Naive thymus-derived CD4-positive, alpha-beta T cell (primary cell): ENCODE measurements at regions of chr1 and their contacts with region 1.

Region 1: GRCh38 chr1:94061513-94062443 is 59.2 kb downstream of the ABCA4 start:
- DNase-seq: peak in 5 of 9 donors; percentile 11 to 31 (median 17)
- ATAC-seq: peak; percentile 78
- H3K4me3 ChIP-seq: no peak overlapping the region
- H3K4me3 Mint-ChIP-seq: no peak overlapping the region
- H3K27ac ChIP-seq: no peak overlapping the region
- H3K27ac Mint-ChIP-seq: no peak overlapping the region
- H3K4me1 ChIP-seq: no peaks in the 10 kb centered on the region
- H3K4me1 Mint-ChIP-seq: peaks cover 0 to 2% (median 0%) of the 10 kb centered on the region in 7 donors
- H3K27me3 ChIP-seq: no peaks in the 10 kb centered on the region
- H3K27me3 Mint-ChIP-seq: peaks cover 7 to 25% (median 14%) of the 10 kb centered on the region in 5 donors

Region 2: DNA sequence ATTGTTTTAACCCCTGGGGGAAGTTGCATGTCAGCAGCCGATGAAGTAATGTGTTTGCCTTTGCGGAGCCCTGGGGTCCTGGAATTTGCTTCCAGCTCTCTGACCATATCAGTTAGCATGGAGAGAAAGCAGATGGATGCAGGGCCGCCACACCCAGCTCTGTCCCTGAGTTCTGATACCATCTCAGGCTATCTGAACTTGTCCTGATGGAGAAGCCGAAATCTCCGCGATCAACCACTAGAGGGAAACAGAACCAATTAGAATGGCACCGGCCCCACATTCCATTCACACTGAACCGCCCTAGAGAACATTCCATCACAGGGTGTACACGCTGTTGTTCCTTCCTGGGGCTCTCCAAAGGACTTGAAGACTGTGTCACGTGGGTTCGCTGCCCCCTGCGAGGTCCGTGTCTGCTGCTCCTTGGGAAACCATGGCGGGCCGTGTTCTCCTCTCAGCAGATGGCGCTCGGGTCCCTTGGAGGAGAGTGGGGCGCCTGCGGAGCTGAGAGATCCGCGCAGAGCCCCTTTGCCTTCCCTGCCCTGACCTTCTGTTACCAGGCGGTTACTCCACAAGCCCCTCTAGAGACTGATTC is 16.2 kb before region 1 on chr1:
- CTCF ChIA-PET with region 1: no interaction called
- POLR2A ChIA-PET with region 1: no interaction called
- intact Hi-C with region 1: no loop called
- DNase-seq: peak in 6 of 9 donors; percentile 14 to 39 (median 20)
- ATAC-seq: peak; percentile 56
- H3K4me3 ChIP-seq: no peak overlapping the region
- H3K4me3 Mint-ChIP-seq: peak overlapping the region in 9 of 10 donors; percentile 25 to 77 (median 68)
- H3K27ac ChIP-seq: no peak overlapping the region
- H3K27ac Mint-ChIP-seq: no peak overlapping the region
- H3K4me1 ChIP-seq: no peaks in the 10 kb centered on the region
- H3K4me1 Mint-ChIP-seq: peaks cover 0 to 10% (median 5%) of the 10 kb centered on the region in 7 donors
- H3K27me3 ChIP-seq: no peaks in the 10 kb centered on the region
- H3K27me3 Mint-ChIP-seq: peaks cover 0 to 28% (median 24%) of the 10 kb centered on the region in 5 donors

Region 3: GRCh38 chr1:94105957-94106529 is 44.3 kb after region 1 on chr1:
- CTCF ChIA-PET with region 1: no interaction called
- POLR2A ChIA-PET with region 1: no interaction called
- intact Hi-C with region 1: no loop called
- DNase-seq: no peak
- ATAC-seq: no peak
- H3K4me3 ChIP-seq: no peak overlapping the region
- H3K4me3 Mint-ChIP-seq: no peak overlapping the region
- H3K27ac ChIP-seq: no peak overlapping the region
- H3K27ac Mint-ChIP-seq: no peak overlapping the region
- H3K4me1 ChIP-seq: no peaks in the 10 kb centered on the region
- H3K4me1 Mint-ChIP-seq: peaks cover 0 to 7% (median 0%) of the 10 kb centered on the region in 7 donors
- H3K27me3 ChIP-seq: no peaks in the 10 kb centered on the region
- H3K27me3 Mint-ChIP-seq: peaks cover 27 to 53% (median 43%) of the 10 kb centered on the region in 5 donors

Region 4: DNA sequence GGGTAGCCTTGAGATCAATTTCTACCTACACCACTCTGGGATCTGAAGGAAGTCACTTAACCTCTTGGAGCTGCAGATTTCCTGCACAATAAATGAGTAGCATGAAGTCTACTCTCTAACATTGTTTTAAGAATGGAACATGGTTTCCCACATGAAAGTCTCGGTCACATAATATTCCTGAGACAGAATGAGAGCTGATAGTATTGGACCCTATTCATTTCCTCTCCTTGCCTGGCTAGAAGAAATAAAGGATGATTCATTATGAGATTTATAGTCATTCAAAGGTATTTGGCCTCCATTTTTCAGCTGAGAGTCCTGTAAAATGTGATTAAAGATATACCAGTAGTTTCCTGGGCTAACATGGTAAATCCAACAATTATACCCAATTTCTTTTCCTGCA is 118.9 kb after region 1 on chr1:
- CTCF ChIA-PET with region 1: no interaction called
- POLR2A ChIA-PET with region 1: no interaction called
- intact Hi-C with region 1: loop called in 1 of 2 experiments (anchors 10 kb)
- DNase-seq: no peak
- ATAC-seq: no peak
- H3K4me3 ChIP-seq: no peak overlapping the region
- H3K4me3 Mint-ChIP-seq: no peak overlapping the region
- H3K27ac ChIP-seq: no peak overlapping the region
- H3K27ac Mint-ChIP-seq: no peak overlapping the region
- H3K4me1 ChIP-seq: no peaks in the 10 kb centered on the region
- H3K4me1 Mint-ChIP-seq: peaks cover 0 to 2% (median 0%) of the 10 kb centered on the region in 7 donors
- H3K27me3 ChIP-seq: no peaks in the 10 kb centered on the region
- H3K27me3 Mint-ChIP-seq: peaks cover 13 to 45% (median 25%) of the 10 kb centered on the region in 5 donors